A549 (cell line): ENCODE measurements at regions of chr5 and their contacts with region 1.

Region 1: DNA sequence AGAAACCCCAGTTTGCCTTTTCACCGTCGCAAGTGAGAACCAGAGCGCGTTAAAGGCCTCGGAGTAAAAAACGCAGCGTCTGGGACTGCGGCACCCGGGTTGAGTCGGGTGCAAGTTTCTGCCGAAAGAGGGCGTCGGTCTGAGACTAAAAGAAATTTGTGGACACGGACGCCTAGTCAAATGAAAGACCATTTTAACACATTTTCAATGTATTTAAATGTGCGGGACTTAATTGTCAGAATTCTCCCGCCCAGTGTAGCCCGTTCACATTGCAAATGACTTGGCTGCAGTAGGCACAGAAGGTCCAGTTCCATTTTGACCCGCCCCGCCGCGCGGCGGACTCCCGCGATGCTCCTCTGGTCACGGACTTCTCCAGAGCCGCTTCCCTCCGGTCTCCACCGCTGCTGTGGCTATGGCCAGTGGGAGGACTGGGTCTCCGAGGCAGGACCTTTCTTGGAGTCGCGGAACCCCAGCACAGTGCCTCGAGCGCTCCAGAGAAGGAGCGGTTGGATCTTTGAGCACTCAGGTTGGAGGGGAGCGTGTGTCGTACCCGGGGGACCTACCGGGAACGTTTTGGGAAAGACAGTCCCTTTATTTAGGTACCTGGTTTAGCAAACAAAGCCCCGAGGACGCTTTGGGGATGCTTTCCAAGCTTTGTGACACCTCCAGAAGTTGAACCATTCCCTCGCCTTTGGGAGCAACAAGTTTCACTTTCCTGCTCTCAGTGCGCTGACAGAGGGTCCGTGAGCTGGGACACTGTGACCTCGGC is 1.2 kb upstream of the NPR3 start:
- DNase-seq: peak; percentile 74 to 86
- ATAC-seq: peak; percentile 85 to 89
- H3K4me3 ChIP-seq: peak overlapping the region; percentile 70
- H3K27ac ChIP-seq: peak overlapping the region; percentile 83 to 91
- H3K4me1 ChIP-seq: peaks cover 28% of the 10 kb centered on the region; the same call in 2 of the 3 replicates
- CTCF ChIP-seq: peak; percentile 87
- EP300 ChIP-seq: no peak
- POLR2A ChIP-seq: no peak
- RAD21 ChIP-seq: peak; percentile 60 to 78

Region 2: DNA sequence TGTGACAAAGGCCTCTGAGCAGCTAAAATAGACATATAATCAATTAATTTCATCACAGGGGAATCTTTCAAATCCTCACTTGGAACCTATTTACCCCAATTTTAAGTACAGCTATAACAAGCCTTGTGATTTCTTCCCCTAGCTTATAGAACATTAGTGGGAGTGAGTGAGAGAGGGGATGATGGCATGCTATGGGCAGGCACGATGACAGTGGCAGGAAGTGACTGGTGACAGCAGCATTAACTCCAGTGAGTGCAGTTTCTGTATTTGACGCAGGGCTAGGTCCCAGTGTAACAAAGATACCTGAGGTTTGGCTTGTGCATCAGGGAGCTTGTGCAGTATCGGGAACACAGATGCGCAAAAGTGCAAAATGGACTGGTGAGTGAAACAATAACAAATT is 55.3 kb after region 1 on chr5:
- CTCF ChIA-PET with region 1: interaction called, 13 read pairs
- POLR2A ChIA-PET with region 1: interaction called, 3 read pairs
- DNase-seq: no peak
- ATAC-seq: no peak
- H3K4me3 ChIP-seq: no peak overlapping the region
- H3K27ac ChIP-seq: peak overlapping the region; percentile 95 to 98
- H3K4me1 ChIP-seq: peaks cover 55% of the 10 kb centered on the region
- CTCF ChIP-seq: no peak
- EP300 ChIP-seq: no peak
- POLR2A ChIP-seq: no peak
- RAD21 ChIP-seq: no peak

Region 3: GRCh38 chr5:32852535-32852934 is 142.6 kb after region 1 on chr5:
- CTCF ChIA-PET with region 1: interaction called, 26 read pairs
- POLR2A ChIA-PET with region 1: no interaction called
- DNase-seq: peak; percentile 15 to 83
- ATAC-seq: peak; percentile 88 to 96
- H3K4me3 ChIP-seq: no peak overlapping the region
- H3K27ac ChIP-seq: peak overlapping the region; percentile 62 to 79
- H3K4me1 ChIP-seq: peaks cover 16% of the 10 kb centered on the region
- CTCF ChIP-seq: peak; percentile 79
- EP300 ChIP-seq: no peak
- POLR2A ChIP-seq: no peak
- RAD21 ChIP-seq: peak; percentile 83 to 85

Region 4: GRCh38 chr5:32916648-32917047 is 206.7 kb after region 1 on chr5:
- CTCF ChIA-PET with region 1: interaction called, 10 read pairs
- POLR2A ChIA-PET with region 1: no interaction called
- DNase-seq: peak; percentile 13 to 56
- ATAC-seq: peak; percentile 78 to 86; a peak in 5 of 6 replicates
- H3K4me3 ChIP-seq: no peak overlapping the region
- H3K27ac ChIP-seq: no peak overlapping the region
- H3K4me1 ChIP-seq: no peaks in the 10 kb centered on the region
- CTCF ChIP-seq: peak; percentile 76
- EP300 ChIP-seq: no peak
- POLR2A ChIP-seq: no peak
- RAD21 ChIP-seq: peak; percentile 88 to 91

Region 5: DNA sequence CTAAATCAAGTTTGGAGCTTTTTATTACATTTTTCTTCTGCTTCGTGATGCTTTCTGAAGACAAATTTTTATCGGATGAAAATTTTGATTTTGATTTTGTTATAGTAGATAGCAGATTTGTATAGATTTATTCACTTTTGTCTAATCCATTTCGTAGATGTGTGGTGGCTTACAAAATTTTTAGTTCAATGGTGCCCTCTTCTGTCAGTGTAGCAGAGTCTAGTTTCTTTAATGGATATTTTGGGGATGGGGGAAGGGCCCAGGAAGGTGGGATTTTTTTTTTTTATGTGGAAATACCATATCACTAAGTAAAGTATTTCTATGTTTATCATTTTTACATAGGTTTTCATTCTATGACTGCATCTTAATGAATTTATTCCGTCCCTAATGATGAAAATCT is 470.9 kb after region 1 on chr5:
- CTCF ChIA-PET with region 1: interaction called, 30 read pairs
- POLR2A ChIA-PET with region 1: no interaction called
- DNase-seq: peak; percentile 3 to 52
- ATAC-seq: peak in 1 of 2 experiments; percentile 73; a peak in 3 of 6 replicates
- H3K4me3 ChIP-seq: no peak overlapping the region
- H3K27ac ChIP-seq: no peak overlapping the region
- H3K4me1 ChIP-seq: no peaks in the 10 kb centered on the region
- CTCF ChIP-seq: peak; percentile 85
- EP300 ChIP-seq: no peak
- POLR2A ChIP-seq: no peak
- RAD21 ChIP-seq: peak; percentile 82 to 94

Region 6: DNA sequence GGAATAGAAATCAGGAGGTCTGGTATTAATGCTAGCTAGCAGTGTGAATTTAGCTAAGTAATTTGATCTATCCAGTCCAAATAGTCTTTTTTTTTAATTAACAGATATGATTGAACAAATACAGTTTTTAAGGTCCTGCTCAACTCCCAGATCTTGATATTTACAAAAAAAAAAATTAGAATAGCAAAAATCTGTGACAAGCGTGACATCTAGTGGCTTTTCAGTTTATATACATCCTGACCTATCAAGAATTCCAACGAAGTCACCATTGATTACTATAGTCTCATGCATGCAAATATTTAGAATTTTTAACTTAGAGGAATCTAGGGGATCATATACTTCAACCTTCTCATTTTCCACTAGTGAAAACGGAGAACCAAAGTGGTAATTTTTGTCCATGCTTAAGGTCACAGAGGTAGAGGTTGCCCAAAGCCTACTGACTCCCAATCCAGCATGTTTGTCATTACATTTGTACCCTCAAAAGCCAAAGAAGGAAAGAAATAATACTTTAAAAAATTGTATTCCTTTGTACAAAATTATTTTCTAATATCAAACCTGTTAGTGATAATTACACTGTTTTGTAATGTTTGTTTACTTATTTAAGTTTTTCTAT is 713.2 kb after region 1 on chr5:
- CTCF ChIA-PET with region 1: interaction called, 11 read pairs
- POLR2A ChIA-PET with region 1: no interaction called
- DNase-seq: peak in 1 of 2 experiments; percentile 39
- ATAC-seq: peak; percentile 56 to 61; a peak in 4 of 6 replicates
- H3K4me3 ChIP-seq: no peak overlapping the region
- H3K27ac ChIP-seq: no peak overlapping the region
- H3K4me1 ChIP-seq: no peaks in the 10 kb centered on the region
- CTCF ChIP-seq: peak; percentile 80
- EP300 ChIP-seq: no peak
- POLR2A ChIP-seq: no peak
- RAD21 ChIP-seq: peak; percentile 76 to 87